Naive thymus-derived CD4-positive, alpha-beta T cell (primary cell): ENCODE measurements at regions of chr6 and their contacts with region 1.

Region 1: GRCh38 chr6:90072935-90073464 is 178.7 kb downstream of the GJA10 start:
- DNase-seq: peak in 2 of 9 donors; percentile 15 to 16
- ATAC-seq: peak; percentile 61
- H3K4me3 ChIP-seq: peak overlapping the region; percentile 3
- H3K4me3 Mint-ChIP-seq: peak overlapping the region; percentile 42 to 73 (median 61)
- H3K27ac ChIP-seq: peak overlapping the region; percentile 44
- H3K27ac Mint-ChIP-seq: peak overlapping the region; percentile 60 to 92 (median 83)
- H3K4me1 ChIP-seq: peaks cover 0 to 55% of the 10 kb centered on the region in 2 donors
- H3K4me1 Mint-ChIP-seq: peaks cover 58 to 97% (median 91%) of the 10 kb centered on the region in 7 donors
- H3K27me3 ChIP-seq: no peaks in the 10 kb centered on the region
- H3K27me3 Mint-ChIP-seq: no peaks in the 10 kb centered on the region

Region 2: DNA sequence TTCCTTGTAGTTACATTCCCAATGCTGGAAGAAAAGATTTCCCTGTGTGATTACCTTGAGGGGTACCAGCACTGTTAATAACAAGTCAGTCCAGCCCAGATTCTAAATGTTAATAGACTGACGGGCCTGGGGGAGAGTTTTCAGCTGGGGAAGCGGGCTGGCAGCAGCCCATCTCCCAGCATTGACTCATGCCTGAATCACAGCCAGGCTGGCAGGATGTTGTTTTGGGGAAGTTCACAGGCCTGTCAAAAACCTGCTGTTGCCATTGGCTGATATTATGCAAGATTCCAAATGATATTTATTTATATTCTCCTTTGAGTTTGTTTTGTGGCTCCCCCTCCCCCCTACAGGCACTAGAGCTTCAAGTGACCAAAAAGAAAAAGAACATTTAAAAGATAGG is 1692.9 kb before region 1 on chr6:
- CTCF ChIA-PET with region 1: no interaction called
- POLR2A ChIA-PET with region 1: no interaction called
- intact Hi-C with region 1: no loop called
- DNase-seq: peak in 1 of 9 donors; percentile 7
- ATAC-seq: peak; percentile 81
- H3K4me3 ChIP-seq: no peak overlapping the region
- H3K4me3 Mint-ChIP-seq: no peak overlapping the region
- H3K27ac ChIP-seq: no peak overlapping the region
- H3K27ac Mint-ChIP-seq: no peak overlapping the region
- H3K4me1 ChIP-seq: no peaks in the 10 kb centered on the region
- H3K4me1 Mint-ChIP-seq: no peaks in the 10 kb centered on the region
- H3K27me3 ChIP-seq: no peaks in the 10 kb centered on the region
- H3K27me3 Mint-ChIP-seq: peaks cover 0 to 14% (median 11%) of the 10 kb centered on the region in 5 donors

Region 3: GRCh38 chr6:90049295-90049694 is 23.7 kb before region 1 on chr6:
- CTCF ChIA-PET with region 1: no interaction called
- POLR2A ChIA-PET with region 1: interaction called, 4 read pairs
- intact Hi-C with region 1: loop called in 1 of 2 experiments (anchors 2 kb)
- DNase-seq: no peak
- ATAC-seq: no peak
- H3K4me3 ChIP-seq: no peak overlapping the region
- H3K4me3 Mint-ChIP-seq: peak overlapping the region in 2 of 10 donors; percentile 9 to 12
- H3K27ac ChIP-seq: no peak overlapping the region
- H3K27ac Mint-ChIP-seq: peak overlapping the region; percentile 32 to 76 (median 52)
- H3K4me1 ChIP-seq: peaks cover 0 to 4% of the 10 kb centered on the region in 2 donors
- H3K4me1 Mint-ChIP-seq: peaks cover 25 to 64% (median 48%) of the 10 kb centered on the region in 7 donors
- H3K27me3 ChIP-seq: no peaks in the 10 kb centered on the region
- H3K27me3 Mint-ChIP-seq: no peaks in the 10 kb centered on the region

Region 4: GRCh38 chr6:90062667-90063066 is 10.3 kb before region 1 on chr6:
- CTCF ChIA-PET with region 1: no interaction called
- POLR2A ChIA-PET with region 1: no interaction called
- intact Hi-C with region 1: loop called in 1 of 2 experiments (anchors 1 kb)
- DNase-seq: no peak
- ATAC-seq: no peak
- H3K4me3 ChIP-seq: no peak overlapping the region
- H3K4me3 Mint-ChIP-seq: no peak overlapping the region
- H3K27ac ChIP-seq: no peak overlapping the region
- H3K27ac Mint-ChIP-seq: no peak overlapping the region
- H3K4me1 ChIP-seq: peaks cover 0 to 22% of the 10 kb centered on the region in 2 donors
- H3K4me1 Mint-ChIP-seq: peaks cover 24 to 42% (median 31%) of the 10 kb centered on the region in 7 donors
- H3K27me3 ChIP-seq: no peaks in the 10 kb centered on the region
- H3K27me3 Mint-ChIP-seq: no peaks in the 10 kb centered on the region